Psoas muscle (tissue), 8 donors: ENCODE measurements at regions of chr19 and their contacts with region 1.

Region 1: DNA sequence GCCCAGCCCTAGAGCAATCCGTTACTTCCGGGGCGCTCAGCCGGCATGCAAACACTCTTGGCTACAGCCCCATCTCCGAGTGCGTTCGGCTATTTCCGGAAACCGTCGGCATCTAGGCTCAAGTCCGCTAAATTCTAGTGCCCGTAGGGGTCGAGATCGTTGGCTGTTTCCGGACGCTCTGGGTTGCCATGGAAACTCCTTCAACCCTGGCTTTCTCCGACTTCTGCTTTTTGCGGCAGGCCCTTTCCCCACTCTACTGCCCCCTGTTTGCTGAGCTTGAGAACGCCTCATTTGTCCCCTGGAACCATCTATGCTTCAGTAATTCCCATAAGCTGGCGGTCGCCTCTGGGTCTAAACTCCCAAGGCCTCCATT is 533 bp upstream of the PIK3R2 start:
- DNase-seq: peak; percentile 95 to 97
- ATAC-seq: peak; percentile 48 to 76 (median 67)
- H3K4me3 ChIP-seq: peak overlapping the region; percentile 76
- H3K27ac ChIP-seq: peak overlapping the region; percentile 92
- H3K4me1 ChIP-seq: peaks cover 41% of the 10 kb centered on the region
- H3K27me3 ChIP-seq: no peaks in the 10 kb centered on the region
- CTCF ChIP-seq: peak; percentile 53

Region 2: DNA sequence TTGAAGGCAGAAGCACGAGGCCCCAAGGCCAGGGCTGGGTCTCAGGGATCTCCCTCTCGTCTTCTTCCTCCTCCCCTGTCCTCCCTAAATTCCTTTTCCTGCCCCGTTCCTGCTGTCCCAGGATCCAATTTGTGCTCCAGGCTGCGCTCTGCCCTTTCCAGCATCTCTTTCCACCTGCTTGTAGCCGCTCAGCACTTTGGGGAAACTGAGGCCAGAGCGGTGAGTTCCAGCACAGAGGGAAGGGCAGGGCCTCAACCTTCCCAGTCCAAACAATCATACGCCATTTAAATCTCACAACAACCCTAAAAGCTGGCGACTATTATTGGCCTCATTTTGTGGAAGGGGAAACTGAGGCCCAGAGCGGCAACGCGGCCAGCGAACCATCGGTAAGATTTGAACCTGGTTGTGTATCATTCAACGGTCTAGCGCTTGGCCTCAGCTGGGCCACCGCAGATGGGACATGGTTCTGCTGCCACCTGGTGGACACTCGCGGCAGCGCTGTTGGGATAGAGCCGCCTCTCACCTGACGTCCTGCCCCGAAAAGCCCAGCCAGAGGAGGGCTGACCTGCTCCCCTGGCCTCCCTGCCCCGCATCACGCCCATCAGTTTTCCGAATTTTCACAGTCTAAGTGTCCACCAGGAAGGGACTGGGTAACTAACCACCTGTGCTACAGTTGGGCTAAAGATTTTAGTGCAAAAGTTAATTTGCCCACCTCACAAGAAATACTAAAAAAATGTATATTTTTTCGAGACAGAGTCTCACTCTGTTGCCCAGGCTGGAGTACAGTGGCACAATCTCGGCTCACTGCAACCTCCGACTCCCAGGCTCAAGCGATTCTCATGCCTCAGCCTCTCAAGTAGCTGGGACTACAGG is 296.9 kb before region 1 on chr19:
- intact Hi-C with region 1: no loop called
- DNase-seq: peak; percentile 85 to 93
- ATAC-seq: peak; percentile 36 to 52 (median 50)
- H3K4me3 ChIP-seq: no peak overlapping the region
- H3K27ac ChIP-seq: no peak overlapping the region
- H3K4me1 ChIP-seq: no peaks in the 10 kb centered on the region
- H3K27me3 ChIP-seq: no peaks in the 10 kb centered on the region
- CTCF ChIP-seq: peak; percentile 96

Region 3: GRCh38 chr19:18007044-18007916 is 145.2 kb before region 1 on chr19:
- intact Hi-C with region 1: loop called in 1 of 2 experiments (anchors 10 kb)
- DNase-seq: peak; percentile 84 to 93
- ATAC-seq: peak; percentile 67 to 84 (median 72)
- H3K4me3 ChIP-seq: peak overlapping the region; percentile 85
- H3K27ac ChIP-seq: peak overlapping the region; percentile 97
- H3K4me1 ChIP-seq: peaks cover 25% of the 10 kb centered on the region
- H3K27me3 ChIP-seq: peaks cover 0 to 10% (median 0%) of the 10 kb centered on the region in 3 donors
- CTCF ChIP-seq: peak; percentile 99

Region 4: DNA sequence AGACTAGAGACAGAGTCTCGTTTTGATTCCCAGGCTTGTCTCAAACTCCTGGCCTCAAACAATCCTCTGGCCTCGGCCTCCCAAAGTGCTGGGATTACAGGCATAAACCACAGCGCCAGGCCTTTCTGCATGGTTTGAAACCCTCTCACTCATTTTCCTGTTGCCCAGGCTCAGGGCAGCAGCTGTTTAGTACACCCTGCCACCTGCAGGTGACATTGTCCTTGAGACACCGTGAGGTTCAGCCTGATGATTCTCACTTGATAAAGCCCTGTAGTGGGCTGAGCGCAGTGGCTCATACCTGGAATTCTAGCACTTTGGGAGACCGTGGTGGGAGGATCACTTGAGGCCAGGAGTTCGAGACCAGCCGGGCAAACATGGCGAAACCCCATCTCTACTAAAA is 78.2 kb before region 1 on chr19:
- intact Hi-C with region 1: no loop called
- DNase-seq: no peak
- ATAC-seq: no peak
- H3K4me3 ChIP-seq: no peak overlapping the region
- H3K27ac ChIP-seq: no peak overlapping the region
- H3K4me1 ChIP-seq: no peaks in the 10 kb centered on the region
- H3K27me3 ChIP-seq: peaks cover 0 to 4% (median 3%) of the 10 kb centered on the region in 3 donors
- CTCF ChIP-seq: no peak

Region 5: GRCh38 chr19:18167975-18168645 is 15.7 kb after region 1 on chr19:
- intact Hi-C with region 1: no loop called
- DNase-seq: peak in 1 of 2 donors; percentile 63
- ATAC-seq: peak; percentile 50 to 77 (median 66)
- H3K4me3 ChIP-seq: no peak overlapping the region
- H3K27ac ChIP-seq: no peak overlapping the region
- H3K4me1 ChIP-seq: no peaks in the 10 kb centered on the region
- H3K27me3 ChIP-seq: no peaks in the 10 kb centered on the region
- CTCF ChIP-seq: peak; percentile 64

Region 6: GRCh38 chr19:18224525-18225354 is 72.3 kb after region 1 on chr19:
- intact Hi-C with region 1: loop called in 1 of 2 experiments (anchors 5 kb)
- DNase-seq: peak; percentile 99
- ATAC-seq: peak; percentile 96 to 100 (median 97)
- H3K4me3 ChIP-seq: peak overlapping the region; percentile 65
- H3K27ac ChIP-seq: peak overlapping the region; percentile 69
- H3K4me1 ChIP-seq: peaks cover 27% of the 10 kb centered on the region
- H3K27me3 ChIP-seq: peaks cover 0 to 3% (median 0%) of the 10 kb centered on the region in 3 donors
- CTCF ChIP-seq: no peak

Region 7: GRCh38 chr19:18340990-18341868 is 188.8 kb after region 1 on chr19:
- intact Hi-C with region 1: no loop called
- DNase-seq: peak; percentile 69 to 84
- ATAC-seq: peak; percentile 66 to 75 (median 71)
- H3K4me3 ChIP-seq: peak overlapping the region; percentile 90
- H3K27ac ChIP-seq: peak overlapping the region; percentile 91
- H3K4me1 ChIP-seq: peaks cover 11% of the 10 kb centered on the region
- H3K27me3 ChIP-seq: no peaks in the 10 kb centered on the region
- CTCF ChIP-seq: no peak